OCI-LY7 (cell line): ENCODE measurements at regions of chr3 and their contacts with region 1.

Region 1: GRCh38 chr3:187733371-187733770 is 11.9 kb downstream of the BCL6 start:
- DNase-seq: no peak
- H3K4me3 ChIP-seq: no peak overlapping the region
- H3K27ac ChIP-seq: no peak overlapping the region
- H3K4me1 ChIP-seq: peaks cover 38% of the 10 kb centered on the region
- CTCF ChIP-seq: no peak

Region 2: DNA sequence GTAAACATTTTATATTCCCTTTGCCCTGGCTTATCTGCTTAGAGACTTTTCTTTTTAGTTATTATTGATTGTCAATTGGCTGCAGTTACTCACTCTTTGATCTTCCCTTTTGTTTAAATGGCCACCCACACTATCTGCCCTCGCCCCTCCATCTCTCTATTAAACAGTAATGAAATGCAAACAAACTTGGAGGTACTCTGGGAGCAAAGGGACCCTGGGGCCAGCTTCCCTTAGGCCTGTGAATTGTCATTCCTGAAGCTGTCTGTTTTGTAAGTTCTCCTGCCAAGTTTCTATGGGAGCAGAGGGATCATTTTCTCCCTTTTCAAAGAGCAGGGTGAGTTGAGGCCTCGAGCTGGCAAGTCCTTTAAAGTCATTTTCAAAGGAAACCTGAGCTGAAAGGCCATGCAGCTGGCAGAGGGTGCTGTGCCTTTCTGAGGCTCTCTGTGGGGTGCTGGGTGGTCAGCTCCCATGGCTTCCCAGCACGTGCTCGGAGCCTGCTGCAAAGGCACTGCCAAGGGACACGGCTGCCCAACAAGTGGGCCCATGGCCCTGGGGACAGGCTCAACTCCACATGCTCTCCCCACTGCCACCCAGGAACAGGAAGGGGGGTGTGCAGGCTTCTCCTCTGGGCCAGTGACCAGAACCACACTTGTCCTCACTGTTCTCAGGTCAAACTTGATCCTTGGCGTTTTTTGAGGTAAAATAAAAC is 13.6 kb before region 1 on chr3:
- CTCF ChIA-PET with region 1: no interaction called
- POLR2A ChIA-PET with region 1: interaction called, 17 read pairs
- intact Hi-C with region 1: no loop called
- DNase-seq: no peak
- H3K4me3 ChIP-seq: no peak overlapping the region
- H3K27ac ChIP-seq: no peak overlapping the region
- H3K4me1 ChIP-seq: peaks cover 9% of the 10 kb centered on the region
- CTCF ChIP-seq: no peak

Region 3: GRCh38 chr3:187777331-187777941 is 44.1 kb after region 1 on chr3:
- CTCF ChIA-PET with region 1: no interaction called
- POLR2A ChIA-PET with region 1: no interaction called
- intact Hi-C with region 1: no loop called
- DNase-seq: no peak
- H3K4me3 ChIP-seq: no peak overlapping the region
- H3K27ac ChIP-seq: no peak overlapping the region
- H3K4me1 ChIP-seq: peaks cover 36% of the 10 kb centered on the region
- CTCF ChIP-seq: no peak